PC-3 (cell line): ENCODE measurements at regions of chr5 and their contacts with region 1.

Region 1: GRCh38 chr5:59506285-59506877 is 387.1 kb downstream of the PDE4D start:
- DNase-seq: peak; percentile 44
- ATAC-seq: peak; percentile 31; the same call in 1 of the 2 replicates
- H3K4me3 ChIP-seq: no peak overlapping the region
- H3K27ac ChIP-seq: no peak overlapping the region
- H3K4me1 ChIP-seq: no peaks in the 10 kb centered on the region
- H3K27me3 ChIP-seq: no peaks in the 10 kb centered on the region
- CTCF ChIP-seq: peak; percentile 61

Region 2: GRCh38 chr5:59724482-59725391 is 218.4 kb after region 1 on chr5:
- CTCF ChIA-PET with region 1: interaction called, 4 read pairs
- POLR2A ChIA-PET with region 1: no interaction called
- intact Hi-C with region 1: loop called (anchors 1 kb)
- DNase-seq: peak; percentile 58
- ATAC-seq: peak; percentile 61
- H3K4me3 ChIP-seq: no peak overlapping the region
- H3K27ac ChIP-seq: no peak overlapping the region
- H3K4me1 ChIP-seq: peaks cover 15% of the 10 kb centered on the region
- H3K27me3 ChIP-seq: no peaks in the 10 kb centered on the region
- CTCF ChIP-seq: peak; percentile 70